IMR-90 (cell line): ENCODE measurements at regions of chr20 and their contacts with region 1.

Region 1: DNA sequence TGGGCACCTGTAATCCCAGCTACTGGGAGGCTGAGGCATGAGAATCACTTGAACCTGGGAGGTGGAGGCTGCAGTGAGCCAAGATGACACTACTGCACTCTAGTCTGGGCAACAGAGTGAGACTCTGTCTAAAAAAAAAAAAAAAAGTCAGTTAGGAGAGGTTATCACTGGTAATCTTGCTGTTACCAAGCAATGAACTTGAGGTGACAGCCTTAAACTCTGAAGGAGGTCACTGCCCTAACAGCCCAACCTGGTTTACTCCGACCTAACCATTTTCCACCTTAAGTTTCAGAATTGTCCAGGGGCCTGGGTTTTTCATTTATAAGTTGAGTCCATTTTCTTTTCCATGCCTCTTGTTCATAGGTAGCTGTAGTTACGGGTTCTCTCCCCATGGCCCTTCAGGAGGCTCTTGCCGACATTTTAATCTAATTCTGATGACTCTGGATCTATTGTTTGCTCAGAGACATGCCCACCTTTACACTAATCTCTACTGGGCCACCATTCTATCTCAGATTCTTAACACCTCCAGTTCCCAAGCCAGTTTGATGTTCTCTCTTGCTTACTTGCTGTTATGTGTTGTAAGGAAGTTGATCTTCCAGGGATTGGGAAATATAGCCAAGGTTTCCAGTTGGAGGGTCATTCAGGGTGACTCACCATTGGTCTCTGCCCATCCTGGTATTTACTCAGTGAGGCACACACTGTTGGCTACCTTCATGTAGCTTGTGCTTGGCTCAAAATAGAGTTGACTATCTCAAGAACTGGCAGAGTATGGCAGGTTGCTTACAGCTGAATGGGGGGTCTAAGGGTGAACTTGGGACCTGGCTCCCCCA is 29.1 kb downstream of the SHLD1 start:
- DNase-seq: peak; percentile 56
- ATAC-seq: peak; percentile 60
- H3K4me3 ChIP-seq: no peak overlapping the region
- H3K27ac ChIP-seq: no peak overlapping the region
- H3K4me1 ChIP-seq: peaks cover 6% of the 10 kb centered on the region
- H3K27me3 ChIP-seq: no peaks in the 10 kb centered on the region
- CTCF ChIP-seq: no peak
- POLR2A ChIP-seq: no peak
- RAD21 ChIP-seq: no peak

Region 2: GRCh38 chr20:5569021-5569420 is 210.3 kb before region 1 on chr20:
- CTCF ChIA-PET with region 1: interaction called, 3 read pairs
- POLR2A ChIA-PET with region 1: no interaction called
- dilution Hi-C with region 1: no loop called
- in situ Hi-C with region 1: loop called (anchors 10 kb)
- intact Hi-C with region 1: no loop called
- DNase-seq: peak; percentile 59
- ATAC-seq: peak; percentile 75
- H3K4me3 ChIP-seq: no peak overlapping the region
- H3K27ac ChIP-seq: no peak overlapping the region
- H3K4me1 ChIP-seq: no peaks in the 10 kb centered on the region
- H3K27me3 ChIP-seq: no peaks in the 10 kb centered on the region
- CTCF ChIP-seq: peak; percentile 59
- POLR2A ChIP-seq: no peak
- RAD21 ChIP-seq: peak; percentile 63